B cell (primary cell): ENCODE measurements at regions of chr19 and their contacts with region 1.

Region 1: DNA sequence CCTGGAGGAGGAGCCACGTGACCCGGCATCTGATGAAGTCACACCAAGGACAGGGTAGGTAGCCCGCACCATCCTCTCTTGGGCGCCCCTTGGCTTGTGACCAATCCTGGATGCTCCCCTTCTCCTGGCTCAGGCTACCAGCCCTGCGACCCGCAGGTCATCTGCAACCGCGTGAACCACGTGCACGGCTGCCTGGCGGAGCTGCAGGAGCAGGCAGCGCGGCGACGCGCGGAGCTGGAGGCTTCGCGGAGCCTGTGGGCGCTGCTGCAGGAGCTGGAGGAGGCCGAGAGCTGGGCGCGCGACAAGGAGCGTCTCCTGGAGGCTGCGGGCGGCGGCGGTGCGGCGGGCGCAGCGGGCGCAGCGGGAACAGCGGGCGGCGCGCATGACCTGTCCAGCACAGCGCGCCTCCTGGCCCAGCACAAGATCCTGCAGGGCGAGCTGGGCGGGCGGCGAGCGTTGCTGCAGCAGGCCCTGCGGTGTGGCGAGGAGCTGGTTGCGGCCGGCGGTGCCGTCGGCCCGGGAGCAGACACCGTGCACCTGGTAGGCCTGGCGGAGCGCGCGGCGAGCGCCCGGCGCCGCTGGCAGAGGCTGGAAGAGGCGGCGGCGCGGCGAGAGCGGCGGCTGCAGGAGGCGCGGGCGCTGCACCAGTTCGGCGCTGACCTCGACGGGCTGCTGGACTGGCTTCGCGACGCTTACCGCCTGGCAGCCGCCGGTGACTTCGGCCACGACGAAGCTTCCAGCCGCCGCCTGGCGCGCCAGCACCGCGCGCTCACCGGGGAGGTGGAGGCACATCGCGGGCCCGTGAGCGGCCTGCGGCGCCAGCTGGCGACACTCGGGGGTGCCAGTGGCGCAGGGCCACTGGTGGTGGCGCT is 45.9 kb downstream of the SPTBN4 start:
- DNase-seq: no peak
- ATAC-seq: no peak
- H3K4me3 ChIP-seq: no peak overlapping the region
- H3K4me3 Mint-ChIP-seq: no peak overlapping the region
- H3K27ac ChIP-seq: no peak overlapping the region
- H3K27ac Mint-ChIP-seq: no peak overlapping the region
- H3K4me1 ChIP-seq: peaks cover 3 to 7% of the 10 kb centered on the region in 2 donors
- H3K4me1 Mint-ChIP-seq: peaks cover 3% of the 10 kb centered on the region
- H3K27me3 ChIP-seq: peaks cover 0 to 54% (median 16%) of the 10 kb centered on the region in 4 experiments
- H3K27me3 Mint-ChIP-seq: peaks cover 57% of the 10 kb centered on the region
- CTCF ChIP-seq: no peak

Region 2: DNA sequence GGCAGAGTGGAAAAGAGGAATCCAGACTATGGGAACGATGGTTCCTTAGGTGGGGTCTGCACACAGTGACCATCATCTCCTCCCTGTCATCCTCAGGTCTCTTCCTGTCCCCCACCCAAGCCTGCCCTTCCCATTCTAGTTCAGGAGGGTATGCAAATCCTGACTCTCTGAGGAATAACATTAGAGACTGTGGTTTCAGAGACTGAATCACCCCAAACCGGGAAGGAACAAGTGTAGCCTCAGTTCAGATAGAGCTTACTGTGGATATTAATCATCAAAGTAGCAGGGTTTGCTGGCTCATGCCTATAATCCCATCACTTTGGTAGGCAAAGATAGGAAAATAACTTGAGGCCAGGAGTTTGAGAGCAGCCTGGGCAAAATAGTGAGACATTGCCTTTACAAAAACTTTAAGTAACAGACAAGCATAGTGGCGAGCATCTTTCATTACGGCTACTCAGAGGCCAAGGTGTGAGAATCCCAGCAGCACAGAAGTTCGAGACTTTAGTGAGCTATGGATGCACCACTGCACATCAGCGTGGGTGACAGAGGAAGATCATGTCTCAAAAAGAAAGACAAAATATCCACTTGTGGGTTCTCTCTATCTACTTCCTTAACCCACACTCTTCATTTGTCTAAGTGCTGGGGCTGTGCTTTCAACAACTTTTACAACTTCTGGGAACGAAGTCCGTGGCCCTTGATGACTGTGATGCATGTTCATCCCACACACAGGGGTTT is 929.7 kb before region 1 on chr19:
- CTCF ChIA-PET with region 1: no interaction called
- POLR2A ChIA-PET with region 1: no interaction called
- intact Hi-C with region 1: no loop called
- DNase-seq: no peak
- ATAC-seq: no peak
- H3K4me3 ChIP-seq: no peak overlapping the region
- H3K4me3 Mint-ChIP-seq: no peak overlapping the region
- H3K27ac ChIP-seq: no peak overlapping the region
- H3K27ac Mint-ChIP-seq: no peak overlapping the region
- H3K4me1 ChIP-seq: peaks cover 0 to 6% of the 10 kb centered on the region in 2 donors
- H3K4me1 Mint-ChIP-seq: no peaks in the 10 kb centered on the region
- H3K27me3 ChIP-seq: peaks cover 0 to 15% (median 7%) of the 10 kb centered on the region in 4 experiments
- H3K27me3 Mint-ChIP-seq: peaks cover 39% of the 10 kb centered on the region
- CTCF ChIP-seq: no peak

Region 3: DNA sequence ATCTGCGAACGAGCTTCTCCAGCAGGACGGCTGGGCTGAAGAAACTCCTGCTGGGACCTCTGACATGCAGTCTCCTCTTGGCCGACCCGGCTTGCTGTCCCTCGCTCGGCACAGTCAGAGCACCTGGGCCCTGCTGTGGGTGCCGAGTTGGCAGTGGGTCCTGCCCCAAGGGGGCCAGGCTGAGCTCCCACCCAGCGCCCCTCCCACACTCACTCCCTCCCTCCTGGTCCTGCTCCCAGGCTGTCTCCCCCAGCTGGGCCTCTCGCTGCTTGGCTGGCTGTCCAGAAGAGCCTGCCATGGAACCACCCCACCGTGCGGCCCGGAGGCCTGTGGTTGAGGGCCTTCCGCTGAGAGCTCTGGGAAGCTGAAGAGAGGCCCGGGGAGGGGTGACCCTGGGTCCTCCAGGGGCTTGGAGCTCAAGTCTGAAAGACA is 233.6 kb before region 1 on chr19:
- CTCF ChIA-PET with region 1: no interaction called
- POLR2A ChIA-PET with region 1: interaction called, 10 read pairs
- intact Hi-C with region 1: no loop called
- DNase-seq: peak; percentile 16
- ATAC-seq: no peak
- H3K4me3 ChIP-seq: no peak overlapping the region
- H3K4me3 Mint-ChIP-seq: peak overlapping the region; percentile 32
- H3K27ac ChIP-seq: peak overlapping the region; percentile 66 to 100
- H3K27ac Mint-ChIP-seq: no peak overlapping the region
- H3K4me1 ChIP-seq: peaks cover 61 to 78% of the 10 kb centered on the region in 2 donors
- H3K4me1 Mint-ChIP-seq: peaks cover 80% of the 10 kb centered on the region
- H3K27me3 ChIP-seq: no peaks in the 10 kb centered on the region
- H3K27me3 Mint-ChIP-seq: no peaks in the 10 kb centered on the region
- CTCF ChIP-seq: no peak